ENCODE measurements at regions of chr7 and their contacts with region 1.

Region 1: DNA sequence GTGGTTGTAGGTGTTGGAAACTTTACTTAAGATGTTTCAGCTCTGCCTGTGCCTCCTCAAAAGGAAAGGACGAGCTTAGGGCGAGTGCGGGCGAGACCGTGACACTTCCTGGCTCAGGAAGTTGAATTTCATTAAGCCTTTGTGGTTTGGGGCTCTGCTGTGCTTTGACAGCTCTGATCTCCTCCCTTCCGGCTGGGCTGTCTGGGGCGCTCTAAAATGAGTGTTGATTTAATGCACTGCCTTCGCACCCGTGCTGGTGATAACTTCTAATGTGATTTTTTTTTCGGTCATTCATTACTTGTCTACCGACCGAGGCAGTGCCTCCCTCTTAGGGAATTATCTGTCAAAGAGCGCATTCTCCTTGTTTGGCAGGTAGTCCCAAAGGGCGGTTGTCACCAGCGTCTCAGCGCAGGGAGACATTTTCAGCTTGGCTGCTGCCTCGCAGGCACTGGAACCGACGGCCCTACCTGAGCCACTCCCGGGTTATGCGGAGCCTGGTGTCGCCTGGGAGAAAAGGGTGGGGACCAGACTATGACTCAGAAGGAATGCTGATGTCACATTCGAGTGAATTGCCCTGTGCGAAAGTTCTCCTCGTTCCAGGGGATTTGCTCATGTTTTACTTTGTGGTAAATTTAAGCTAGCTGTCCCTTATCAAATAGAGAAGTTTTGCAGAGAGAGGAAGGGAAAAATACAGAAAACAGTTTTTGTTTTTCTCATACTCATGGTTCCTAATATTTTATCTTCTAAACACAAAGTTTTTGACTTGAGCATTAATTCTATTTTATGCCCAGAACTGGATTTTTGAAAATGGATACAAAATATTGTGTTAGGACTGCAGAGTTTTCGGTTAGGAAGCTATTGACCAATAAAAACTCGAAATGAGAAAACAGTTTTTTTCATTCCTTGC is 920 bp downstream of the TES start:
- DNase-seq: peak; percentile 62 to 94 (median 83)
- ATAC-seq: peak; percentile 77
- H3K4me3 ChIP-seq: peak overlapping the region; percentile 71 to 86
- H3K4me3 Mint-ChIP-seq: peak overlapping the region; percentile 98
- H3K27ac ChIP-seq: peak overlapping the region; percentile 91 to 93
- H3K27ac Mint-ChIP-seq: peak overlapping the region; percentile 99
- H3K4me1 ChIP-seq: peaks cover 50% of the 10 kb centered on the region
- H3K4me1 Mint-ChIP-seq: peaks cover 57% of the 10 kb centered on the region
- H3K27me3 ChIP-seq: no peaks in the 10 kb centered on the region
- H3K27me3 Mint-ChIP-seq: no peaks in the 10 kb centered on the region
- CTCF ChIP-seq: no peak

Region 2: DNA sequence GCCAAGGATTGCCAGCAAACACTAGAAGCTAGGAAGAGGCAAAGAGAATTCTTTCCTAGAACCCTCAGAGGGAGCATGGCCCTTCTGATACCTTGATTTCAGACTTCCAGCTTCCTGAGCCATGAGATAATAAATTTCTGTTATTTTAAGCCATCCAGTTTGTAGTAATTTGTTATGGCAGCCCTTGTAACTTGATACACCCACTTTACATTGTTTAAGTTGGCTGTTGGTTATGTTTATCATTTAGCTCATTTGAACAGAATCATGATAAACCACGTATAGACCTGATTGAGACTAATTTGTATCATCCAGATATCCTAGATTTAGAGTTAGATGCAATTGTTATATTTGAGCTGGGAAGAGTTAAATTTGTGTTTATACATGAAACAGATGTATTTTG is 10.3 kb before region 1 on chr7:
- CTCF ChIA-PET with region 1: interaction called, 9 read pairs
- POLR2A ChIA-PET with region 1: interaction called, 5 read pairs
- intact Hi-C with region 1: loop called in 1 of 2 experiments (anchors 1 kb)
- DNase-seq: no peak
- ATAC-seq: no peak
- H3K4me3 ChIP-seq: no peak overlapping the region
- H3K4me3 Mint-ChIP-seq: no peak overlapping the region
- H3K27ac ChIP-seq: no peak overlapping the region
- H3K27ac Mint-ChIP-seq: no peak overlapping the region
- H3K4me1 ChIP-seq: no peaks in the 10 kb centered on the region
- H3K4me1 Mint-ChIP-seq: no peaks in the 10 kb centered on the region
- H3K27me3 ChIP-seq: no peaks in the 10 kb centered on the region
- H3K27me3 Mint-ChIP-seq: no peaks in the 10 kb centered on the region
- CTCF ChIP-seq: no peak

Region 3: DNA sequence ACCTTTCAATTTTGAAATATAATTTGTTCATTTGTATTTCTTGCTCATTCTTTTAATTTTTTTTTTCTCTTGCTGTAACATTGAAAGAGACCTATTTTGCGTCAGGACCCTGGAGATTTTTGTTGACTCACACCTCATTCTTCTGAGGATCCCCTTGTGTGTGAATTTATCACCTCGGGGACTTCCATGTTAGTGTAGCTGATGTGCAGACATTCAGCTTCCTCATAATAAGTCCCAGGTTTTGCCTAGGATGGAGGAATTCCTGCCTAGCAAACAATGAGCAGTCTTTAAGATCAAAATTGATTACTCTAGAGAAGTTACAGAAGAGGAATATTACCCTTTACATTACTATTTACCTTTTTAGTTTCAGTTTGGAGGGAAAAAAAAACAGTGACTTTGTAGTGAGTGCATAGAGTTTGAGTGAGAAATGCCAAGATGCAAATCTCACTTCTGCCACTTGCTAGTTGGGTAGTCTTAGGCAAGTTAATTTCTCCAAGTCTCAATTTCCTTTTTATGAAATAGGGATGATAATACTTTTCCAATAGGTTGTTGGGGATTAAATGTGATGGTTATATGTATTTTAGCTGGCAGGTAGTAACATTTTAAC is 13.3 kb after region 1 on chr7:
- CTCF ChIA-PET with region 1: interaction called, 3 read pairs
- POLR2A ChIA-PET with region 1: interaction called, 6 read pairs
- intact Hi-C with region 1: loop called (anchors 1 to 2 kb)
- DNase-seq: peak in 3 of 9 experiments; percentile 15 to 77 (median 60)
- ATAC-seq: peak; percentile 73
- H3K4me3 ChIP-seq: peak overlapping the region in 1 of 2 experiments; percentile 13
- H3K4me3 Mint-ChIP-seq: peak overlapping the region; percentile 69
- H3K27ac ChIP-seq: peak overlapping the region in 1 of 2 experiments; percentile 67
- H3K27ac Mint-ChIP-seq: peak overlapping the region; percentile 49
- H3K4me1 ChIP-seq: peaks cover 76% of the 10 kb centered on the region
- H3K4me1 Mint-ChIP-seq: peaks cover 87% of the 10 kb centered on the region
- H3K27me3 ChIP-seq: no peaks in the 10 kb centered on the region
- H3K27me3 Mint-ChIP-seq: no peaks in the 10 kb centered on the region
- CTCF ChIP-seq: no peak

Region 4: DNA sequence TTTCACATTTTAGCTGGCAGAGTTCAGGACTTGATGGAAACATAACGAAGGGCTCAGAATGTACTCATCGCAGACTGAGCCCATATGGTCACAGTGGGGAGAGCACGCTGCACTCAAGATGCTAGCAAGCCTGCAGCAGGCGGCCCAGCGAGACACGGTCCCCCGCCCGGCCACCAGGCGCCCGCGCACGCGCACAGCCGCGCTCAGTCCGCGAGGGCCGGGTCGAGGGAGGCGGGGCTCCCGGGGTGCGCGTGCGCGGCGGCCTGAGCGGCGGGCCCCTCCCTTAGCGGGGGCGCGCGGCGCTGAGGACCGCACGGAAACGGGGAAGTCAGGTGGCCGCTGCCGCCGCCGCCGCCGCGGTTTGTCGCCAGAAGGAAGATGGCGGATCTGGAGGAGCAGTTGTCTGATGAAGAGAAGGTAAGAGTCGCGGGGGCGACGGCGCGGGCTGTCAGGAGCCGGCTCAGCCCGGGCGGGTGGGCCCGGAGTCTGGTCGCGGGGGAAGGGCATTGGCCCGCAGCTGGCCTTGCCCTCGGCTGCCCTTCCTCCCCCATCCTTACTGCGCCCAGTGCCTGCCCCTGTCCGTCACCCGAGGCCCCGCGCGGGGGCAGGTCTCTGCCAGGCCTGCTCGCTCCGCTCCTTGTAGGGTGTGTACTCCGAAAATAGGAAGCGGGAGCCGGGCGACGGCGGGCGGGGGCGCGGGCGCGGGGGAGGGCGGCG is 651.1 kb after region 1 on chr7 and contains the start of gene CAPZA2:
- CTCF ChIA-PET with region 1: no interaction called
- POLR2A ChIA-PET with region 1: no interaction called
- intact Hi-C with region 1: loop called (anchors 2 kb)
- DNase-seq: peak; percentile 88 to 97 (median 95)
- ATAC-seq: peak; percentile 89
- H3K4me3 ChIP-seq: peak within 1 kb of the TSS; percentile 73 to 79
- H3K4me3 Mint-ChIP-seq: peak within 1 kb of the TSS; percentile 96
- H3K27ac ChIP-seq: peak within 1 kb of the TSS; percentile 77 to 82
- H3K27ac Mint-ChIP-seq: peak within 1 kb of the TSS; percentile 96
- H3K4me1 ChIP-seq: peaks cover 15% of the 10 kb centered on the region
- H3K4me1 Mint-ChIP-seq: peaks cover 44% of the 10 kb centered on the region
- H3K27me3 ChIP-seq: no peaks in the 10 kb centered on the region
- H3K27me3 Mint-ChIP-seq: peaks cover 7% of the 10 kb centered on the region
- CTCF ChIP-seq: peak; percentile 42
- total RNA-seq, gene CAPZA2: 92.6 to 101 TPM